Calu3 (cell line): ENCODE measurements at regions of chr10 and their contacts with region 1.

Region 1: GRCh38 chr10:133438711-133439273 is 14.4 kb upstream of the SPRN start:
- DNase-seq: no peak
- H3K4me3 Mint-ChIP-seq: no peak overlapping the region
- H3K27ac Mint-ChIP-seq: no peak overlapping the region
- H3K4me1 Mint-ChIP-seq: peaks cover 9% of the 10 kb centered on the region
- H3K27me3 Mint-ChIP-seq: no peaks in the 10 kb centered on the region
- CTCF ChIP-seq: no peak

Region 2: GRCh38 chr10:133100706-133101415 is 337.9 kb before region 1 on chr10:
- CTCF ChIA-PET with region 1: no interaction called
- intact Hi-C with region 1: no loop called
- DNase-seq: peak; percentile 71
- H3K4me3 Mint-ChIP-seq: no peak overlapping the region
- H3K27ac Mint-ChIP-seq: no peak overlapping the region
- H3K4me1 Mint-ChIP-seq: no peaks in the 10 kb centered on the region
- H3K27me3 Mint-ChIP-seq: peaks cover 33% of the 10 kb centered on the region
- CTCF ChIP-seq: no peak

Region 3: GRCh38 chr10:133516057-133516456 is 77.3 kb after region 1 on chr10:
- CTCF ChIA-PET with region 1: no interaction called
- intact Hi-C with region 1: loop called (anchors 10 kb)
- DNase-seq: no peak
- H3K4me3 Mint-ChIP-seq: no peak overlapping the region
- H3K27ac Mint-ChIP-seq: no peak overlapping the region
- H3K4me1 Mint-ChIP-seq: peaks cover 20% of the 10 kb centered on the region
- H3K27me3 Mint-ChIP-seq: no peaks in the 10 kb centered on the region
- CTCF ChIP-seq: no peak

Region 4: GRCh38 chr10:133608855-133609254 is 170.1 kb after region 1 on chr10:
- CTCF ChIA-PET with region 1: no interaction called
- intact Hi-C with region 1: loop called (anchors 2 kb)
- DNase-seq: peak; percentile 4
- H3K4me3 Mint-ChIP-seq: no peak overlapping the region
- H3K27ac Mint-ChIP-seq: no peak overlapping the region
- H3K4me1 Mint-ChIP-seq: no peaks in the 10 kb centered on the region
- H3K27me3 Mint-ChIP-seq: peaks cover 60% of the 10 kb centered on the region
- CTCF ChIP-seq: peak; percentile 19